ENCODE measurements at regions of chr1 and their contacts with region 1.

Region 1: DNA sequence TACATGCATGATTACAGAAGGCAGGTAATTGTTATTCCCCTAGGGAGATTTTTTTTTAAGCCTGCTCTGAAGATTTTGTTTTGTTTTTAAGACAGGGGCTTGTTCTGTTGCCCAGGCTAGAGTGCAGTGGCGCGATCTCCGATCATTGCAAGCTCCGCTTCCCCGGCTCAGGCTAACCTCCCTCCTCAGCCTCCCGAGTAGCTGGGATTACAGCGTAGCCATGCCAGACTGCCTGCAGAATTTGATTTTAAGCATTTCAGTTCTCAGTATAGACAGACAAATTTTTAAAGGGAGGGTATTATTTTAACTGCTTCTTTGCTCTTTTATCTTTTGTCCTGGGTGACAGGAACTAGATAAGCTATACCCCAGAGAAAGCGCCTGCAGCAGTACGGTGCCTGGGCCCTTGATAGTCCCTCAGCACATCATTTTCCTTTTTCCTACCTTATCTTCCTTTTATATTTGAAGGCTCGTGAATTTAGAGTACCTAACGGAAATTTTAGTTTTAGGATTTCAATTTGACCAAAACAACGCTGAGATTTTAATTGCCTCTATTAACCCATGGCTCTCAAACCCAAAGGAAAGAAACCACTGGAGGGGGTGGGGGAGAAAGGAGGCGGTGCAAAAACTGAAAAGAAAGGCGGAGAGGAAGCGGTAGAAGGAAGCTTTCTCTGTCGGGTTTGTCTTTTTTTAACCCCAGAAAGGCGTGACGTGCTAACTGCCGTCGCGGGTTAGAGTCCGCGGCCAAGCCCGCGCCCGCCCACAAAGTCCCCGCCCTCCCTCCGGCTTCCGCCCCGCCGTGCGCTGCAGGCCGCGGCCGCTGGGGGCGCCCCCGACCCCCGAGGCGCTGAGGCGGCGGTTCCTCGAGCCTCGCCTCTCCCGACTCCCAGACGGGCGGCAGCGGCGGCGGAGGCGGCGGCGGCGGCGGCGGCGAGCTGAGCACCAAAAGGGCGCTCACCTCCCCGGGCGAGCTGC is at the start of gene EEIG2:
- DNase-seq: peak; percentile 96
- H3K4me3 ChIP-seq: peak within 1 kb of the TSS; percentile 72
- H3K27ac ChIP-seq: peak within 1 kb of the TSS; percentile 91
- H3K4me1 ChIP-seq: peaks cover 56% of the 10 kb centered on the region
- CTCF ChIP-seq: peak; percentile 75
- total RNA-seq, gene EEIG2: 21.3 and 24.7 TPM in 2 replicates

Region 2: GRCh38 chr1:107776900-107777663 is 782.4 kb before region 1 on chr1:
- CTCF ChIA-PET with region 1: no interaction called
- POLR2A ChIA-PET with region 1: no interaction called
- intact Hi-C with region 1: loop called (anchors 5 kb)
- DNase-seq: peak; percentile 88
- H3K4me3 ChIP-seq: peak overlapping the region; percentile 30
- H3K27ac ChIP-seq: peak overlapping the region; percentile 72
- H3K4me1 ChIP-seq: peaks cover 42% of the 10 kb centered on the region
- CTCF ChIP-seq: no peak

Region 3: DNA sequence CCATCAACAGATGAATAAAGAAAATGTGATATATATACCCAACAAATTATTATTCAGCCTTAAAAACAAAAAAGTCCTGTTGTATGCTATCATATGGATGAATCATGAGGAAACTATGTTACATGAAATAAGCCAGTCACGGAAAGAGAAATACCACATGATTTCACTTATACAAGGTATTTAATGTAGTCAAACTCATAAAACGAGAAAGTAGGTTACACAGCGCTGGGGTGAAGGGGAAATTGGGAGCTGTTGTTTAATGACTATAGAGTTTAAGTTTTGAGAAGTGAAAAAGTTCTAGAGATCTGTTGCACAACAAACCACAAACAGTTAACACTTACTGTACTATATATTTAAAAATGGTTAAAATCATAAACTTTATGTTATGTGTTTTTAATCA is 417.9 kb before region 1 on chr1:
- CTCF ChIA-PET with region 1: no interaction called
- POLR2A ChIA-PET with region 1: no interaction called
- intact Hi-C with region 1: no loop called
- DNase-seq: no peak
- H3K4me3 ChIP-seq: no peak overlapping the region
- H3K27ac ChIP-seq: no peak overlapping the region
- H3K4me1 ChIP-seq: no peaks in the 10 kb centered on the region
- CTCF ChIP-seq: no peak

Region 4: DNA sequence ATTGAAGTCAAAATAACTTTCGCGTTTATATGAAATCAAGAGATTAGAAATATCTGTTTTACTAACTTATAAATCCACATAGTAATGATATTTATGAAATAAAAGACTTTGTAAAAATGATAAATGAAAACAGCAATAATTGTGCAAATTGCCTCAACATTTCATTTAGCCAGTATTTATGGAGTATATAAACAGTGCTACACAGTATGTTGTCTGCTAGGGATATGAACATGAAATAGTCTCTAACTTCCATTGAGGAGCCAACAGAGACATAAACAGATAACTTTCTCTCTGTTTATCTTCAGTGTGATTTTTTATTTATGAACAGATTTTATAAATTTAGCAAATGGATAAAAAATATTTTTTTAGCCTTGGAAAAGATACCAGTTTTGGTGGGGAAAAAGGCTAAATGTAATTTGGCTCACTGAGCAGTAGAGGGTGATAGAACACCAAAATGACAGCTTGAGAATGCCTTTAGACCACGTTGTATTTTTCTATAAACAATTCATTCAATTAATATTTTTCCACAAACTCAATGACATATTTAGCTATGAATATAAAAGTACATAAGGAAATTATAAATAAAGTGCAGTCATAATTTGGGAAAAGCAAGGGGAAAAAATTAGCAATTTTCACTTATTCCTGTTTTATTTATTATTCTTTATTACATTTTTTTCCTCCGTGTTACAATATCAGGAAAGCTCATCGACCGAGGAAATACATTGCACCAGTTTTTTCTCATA is 47.1 kb before region 1 on chr1:
- CTCF ChIA-PET with region 1: interaction called, 15 read pairs
- POLR2A ChIA-PET with region 1: interaction called, 20 read pairs
- intact Hi-C with region 1: loop called (anchors 1 kb)
- DNase-seq: peak; percentile 59
- H3K4me3 ChIP-seq: no peak overlapping the region
- H3K27ac ChIP-seq: no peak overlapping the region
- H3K4me1 ChIP-seq: no peaks in the 10 kb centered on the region
- CTCF ChIP-seq: peak; percentile 98

Region 5: GRCh38 chr1:108691942-108692723 is 132.6 kb after region 1 on chr1 and contains the start of gene PRPF38B:
- CTCF ChIA-PET with region 1: interaction called, 7 read pairs
- POLR2A ChIA-PET with region 1: interaction called, 11 read pairs
- intact Hi-C with region 1: loop called (anchors 5 kb)
- DNase-seq: peak; percentile 94
- H3K4me3 ChIP-seq: peak within 1 kb of the TSS; percentile 97
- H3K27ac ChIP-seq: peak within 1 kb of the TSS; percentile 83
- H3K4me1 ChIP-seq: peaks cover 28% of the 10 kb centered on the region
- CTCF ChIP-seq: no peak
- total RNA-seq, gene PRPF38B: 37.7 and 47.4 TPM in 2 replicates

Region 6: GRCh38 chr1:108877348-108878159 is 318.1 kb after region 1 on chr1:
- CTCF ChIA-PET with region 1: no interaction called
- POLR2A ChIA-PET with region 1: no interaction called
- intact Hi-C with region 1: loop called (anchors 5 kb)
- DNase-seq: peak; percentile 43
- H3K4me3 ChIP-seq: peak overlapping the region; percentile 94
- H3K27ac ChIP-seq: peak overlapping the region; percentile 48
- H3K4me1 ChIP-seq: peaks cover 11% of the 10 kb centered on the region
- CTCF ChIP-seq: no peak